ENCODE measurements at regions of chr2 and their contacts with region 1.

Region 1: GRCh38 chr2:147989809-147990403 is 30.6 kb downstream of the ORC4 start:
- DNase-seq: no peak
- H3K4me3 ChIP-seq: no peak overlapping the region
- H3K27ac ChIP-seq: no peak overlapping the region
- H3K4me1 ChIP-seq: peaks cover 0 to 16% (median 0%) of the 10 kb centered on the region in 4 donors
- H3K27me3 ChIP-seq: no peaks in the 10 kb centered on the region
- CTCF ChIP-seq: peak; percentile 65 to 75

Region 2: GRCh38 chr2:148184976-148185375 is 195.1 kb after region 1 on chr2:
- intact Hi-C with region 1: no loop called
- DNase-seq: no peak
- H3K4me3 ChIP-seq: no peak overlapping the region
- H3K27ac ChIP-seq: no peak overlapping the region
- H3K4me1 ChIP-seq: no peaks in the 10 kb centered on the region
- H3K27me3 ChIP-seq: no peaks in the 10 kb centered on the region
- CTCF ChIP-seq: no peak

Region 3: DNA sequence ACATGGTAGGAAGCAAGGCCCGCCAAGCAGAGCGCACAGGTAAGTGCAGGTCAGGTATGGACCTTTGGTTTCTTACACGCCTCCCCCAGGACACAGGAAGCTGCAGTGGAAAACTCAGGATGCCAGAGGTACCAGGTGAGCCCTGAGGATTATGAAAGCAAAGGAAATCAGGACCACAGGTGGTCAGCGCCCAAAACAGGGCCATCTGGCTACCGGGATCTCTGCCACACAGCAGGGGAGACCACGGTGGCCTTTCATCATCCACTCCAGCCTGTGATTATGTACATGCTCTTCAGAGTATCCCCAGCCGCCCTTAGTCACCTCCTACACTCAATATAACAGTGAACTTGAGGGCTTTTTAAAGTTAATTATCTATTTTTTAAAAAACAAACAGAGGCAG is 529.1 kb after region 1 on chr2:
- intact Hi-C with region 1: loop called (anchors 10 kb)
- DNase-seq: no peak
- H3K4me3 ChIP-seq: no peak overlapping the region
- H3K27ac ChIP-seq: no peak overlapping the region
- H3K4me1 ChIP-seq: peaks cover 0 to 18% (median 3%) of the 10 kb centered on the region in 4 donors
- H3K27me3 ChIP-seq: no peaks in the 10 kb centered on the region
- CTCF ChIP-seq: no peak

Measured in tibial artery (tissue), 4 donors.